ENCODE measurements at regions of chr3 and their contacts with region 1.

Region 1: GRCh38 chr3:112437146-112438022 is 61.9 kb downstream of the BTLA start:
- DNase-seq: no peak
- ATAC-seq: peak; percentile 79
- H3K4me3 ChIP-seq: no peak overlapping the region
- H3K27ac ChIP-seq: no peak overlapping the region
- H3K4me1 ChIP-seq: peaks cover 5% of the 10 kb centered on the region
- H3K27me3 ChIP-seq: no peaks in the 10 kb centered on the region
- CTCF ChIP-seq: peak; percentile 22 to 62 (median 28); a peak in 4 of 6 replicates
- EP300 ChIP-seq: no peak
- POLR2A ChIP-seq: no peak
- RAD21 ChIP-seq: peak; percentile 84

Region 2: GRCh38 chr3:112456147-112456546 is 18.8 kb after region 1 on chr3:
- CTCF ChIA-PET with region 1: interaction called, 18 read pairs
- POLR2A ChIA-PET with region 1: no interaction called
- RAD21 ChIA-PET with region 1: interaction called, 4 read pairs
- SMC1A ChIA-PET with region 1: interaction called, 21 read pairs
- in situ Hi-C with region 1: no loop called
- intact Hi-C with region 1: no loop called
- DNase-seq: no peak
- ATAC-seq: peak; percentile 46
- H3K4me3 ChIP-seq: no peak overlapping the region
- H3K27ac ChIP-seq: peak overlapping the region; percentile 61
- H3K4me1 ChIP-seq: peaks cover 17% of the 10 kb centered on the region
- H3K27me3 ChIP-seq: no peaks in the 10 kb centered on the region
- CTCF ChIP-seq: no peak
- EP300 ChIP-seq: peak; percentile 59 to 68; a peak in 1 of 4 replicates
- POLR2A ChIP-seq: no peak
- RAD21 ChIP-seq: peak; percentile 21; the same call in 1 of the 2 replicates

Region 3: DNA sequence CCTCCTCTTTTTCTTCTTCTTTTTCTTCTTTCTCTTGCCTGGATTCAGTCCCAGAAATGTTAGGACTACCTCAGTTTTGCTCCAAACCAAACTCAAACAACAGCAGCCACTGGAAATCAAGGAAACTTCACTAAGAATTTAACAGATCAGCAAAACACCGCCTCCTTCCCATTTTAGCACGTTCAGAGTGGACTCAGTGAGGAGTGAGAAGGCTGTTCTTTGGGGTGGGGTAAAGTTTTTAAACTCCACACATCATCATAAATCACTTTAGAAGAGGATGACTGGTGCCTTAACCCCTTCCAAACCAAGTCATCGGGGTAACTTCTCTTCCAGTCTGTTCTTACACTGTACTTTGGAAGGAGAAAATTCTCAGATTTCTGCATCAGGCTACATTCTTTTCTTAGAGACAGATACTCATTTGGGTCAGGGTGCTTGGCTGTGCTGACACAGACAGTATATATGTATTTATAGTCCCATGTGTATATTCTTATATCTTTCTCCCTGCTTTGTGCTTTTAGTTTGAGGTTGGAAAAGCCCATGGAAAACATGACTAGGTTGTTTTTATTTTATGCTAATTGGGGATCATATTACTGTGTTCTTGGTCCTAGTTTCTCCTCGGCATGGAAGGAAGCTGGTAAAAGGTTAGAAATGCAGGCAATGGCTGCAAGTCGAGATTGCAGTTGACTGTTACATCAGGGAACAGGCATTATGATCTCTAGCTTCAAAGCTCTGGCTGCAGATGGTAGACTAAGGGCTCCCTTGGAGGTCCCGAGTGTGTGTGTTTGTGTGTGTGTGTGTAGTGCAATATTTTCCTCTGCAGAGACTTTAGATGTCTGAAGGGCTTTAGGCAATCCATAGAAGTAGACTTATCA is 203.8 kb after region 1 on chr3 and contains the start of gene CCDC80:
- CTCF ChIA-PET with region 1: no interaction called
- POLR2A ChIA-PET with region 1: no interaction called
- RAD21 ChIA-PET with region 1: no interaction called
- SMC1A ChIA-PET with region 1: no interaction called
- in situ Hi-C with region 1: no loop called
- intact Hi-C with region 1: no loop called
- DNase-seq: no peak
- ATAC-seq: no peak
- H3K4me3 ChIP-seq: no peak within 1 kb of the TSS
- H3K27ac ChIP-seq: no peak within 1 kb of the TSS
- H3K4me1 ChIP-seq: peaks cover 15% of the 10 kb centered on the region
- H3K27me3 ChIP-seq: peaks cover 0 to 4% of the 10 kb centered on the region in 2 experiments; a peak in 3 of 4 replicates
- CTCF ChIP-seq: no peak
- EP300 ChIP-seq: no peak
- POLR2A ChIP-seq: no peak
- RAD21 ChIP-seq: no peak
- polyA plus RNA-seq, gene CCDC80: 0.02 TPM in 1 of 2 experiments, not detected in the other

Measured in GM12878 (cell line).